ENCODE measurements at regions of chr1 and their contacts with region 1.

Region 1: GRCh38 chr1:244104309-244105060 is 53.4 kb downstream of the ZBTB18 start:
- DNase-seq: peak; percentile 93
- ATAC-seq: peak; percentile 98
- H3K4me3 ChIP-seq: no peak overlapping the region
- H3K27ac ChIP-seq: 0 out of 2 replicates have a peak overlapping the region, but pooled peaks have one; percentile 13
- H3K4me1 ChIP-seq: peaks cover 14% of the 10 kb centered on the region
- H3K27me3 ChIP-seq: no peaks in the 10 kb centered on the region; the same call in 1 of the 2 replicates
- CTCF ChIP-seq: no peak
- POLR2A ChIP-seq: no peak
- RAD21 ChIP-seq: peak; percentile 32

Region 2: GRCh38 chr1:243917177-243917862 is 187.2 kb before region 1 on chr1:
- CTCF ChIA-PET with region 1: no interaction called
- POLR2A ChIA-PET with region 1: no interaction called
- dilution Hi-C with region 1: no loop called
- in situ Hi-C with region 1: no loop called
- intact Hi-C with region 1: loop called (anchors 5 kb)
- DNase-seq: peak; percentile 93
- ATAC-seq: peak; percentile 97
- H3K4me3 ChIP-seq: peak overlapping the region; percentile 51
- H3K27ac ChIP-seq: peak overlapping the region; percentile 27
- H3K4me1 ChIP-seq: peaks cover 8% of the 10 kb centered on the region
- H3K27me3 ChIP-seq: no peaks in the 10 kb centered on the region
- CTCF ChIP-seq: 0 out of 2 replicates have a peak, but pooled peaks have one; percentile 11
- POLR2A ChIP-seq: peak; percentile 92
- RAD21 ChIP-seq: peak; percentile 15; the same call in 1 of the 2 replicates

Measured in IMR-90 (cell line).